ENCODE measurements at regions of chr2 and their contacts with region 1.

Region 1: DNA sequence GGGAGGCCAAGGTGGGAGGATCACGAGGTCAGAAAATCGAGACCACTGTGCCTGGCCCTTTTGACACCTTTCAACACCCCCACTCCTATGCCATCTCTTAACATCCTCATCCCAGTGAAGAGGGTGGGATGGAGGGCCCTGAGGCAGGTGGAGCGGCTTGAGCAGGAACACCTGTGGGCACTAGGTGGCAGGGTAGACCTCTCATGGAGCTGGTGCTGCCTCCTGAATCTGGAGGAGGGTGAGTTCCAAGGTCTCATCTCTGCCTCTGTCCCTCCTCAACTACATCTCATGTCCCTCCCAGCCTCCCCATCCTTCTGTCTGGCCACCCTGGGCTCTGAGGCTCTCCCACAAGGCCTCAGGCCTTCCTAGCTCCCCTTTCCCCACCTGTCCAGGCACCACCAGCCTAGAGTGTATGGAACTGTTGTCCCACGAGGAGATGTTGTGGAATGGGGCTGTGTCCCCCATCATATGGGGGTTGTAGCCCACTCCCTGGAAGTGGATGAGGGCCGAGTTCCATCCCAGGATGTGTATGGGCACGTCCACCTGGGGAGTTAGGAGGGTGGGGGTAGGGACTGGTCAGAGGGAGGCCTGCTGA is 17.0 kb upstream of the CRYBA2 start:
- DNase-seq: peak; percentile 42
- ATAC-seq: peak; percentile 70
- H3K4me3 Mint-ChIP-seq: no peak overlapping the region
- H3K27ac Mint-ChIP-seq: no peak overlapping the region
- H3K4me1 Mint-ChIP-seq: no peaks in the 10 kb centered on the region
- H3K27me3 Mint-ChIP-seq: peaks cover 14% of the 10 kb centered on the region

Region 2: GRCh38 chr2:218995972-218996711 is 14.1 kb before region 1 on chr2:
- CTCF ChIA-PET with region 1: interaction called, 10 read pairs
- POLR2A ChIA-PET with region 1: no interaction called
- DNase-seq: peak; percentile 81
- ATAC-seq: peak; percentile 61
- H3K4me3 Mint-ChIP-seq: no peak overlapping the region
- H3K27ac Mint-ChIP-seq: no peak overlapping the region
- H3K4me1 Mint-ChIP-seq: peaks cover 8% of the 10 kb centered on the region
- H3K27me3 Mint-ChIP-seq: peaks cover 83% of the 10 kb centered on the region

Measured in activated CD8-positive, alpha-beta T cell treated with anti-CD3 and anti-CD28 coated beads, Interleukin-2, amount 10 ng/mL, durations not matched to agents 7 days and 5 days (primary cell).